Adrenal gland (tissue), 19 donors: ENCODE measurements at regions of chr12 and their contacts with region 1.

Region 1: GRCh38 chr12:50055831-50056638 is 1.4 kb upstream of the ASIC1 start:
- DNase-seq: peak in 3 of 7 donors; percentile 40 to 62 (median 52)
- H3K4me3 ChIP-seq: no peak overlapping the region
- H3K27ac ChIP-seq: no peak overlapping the region
- H3K4me1 ChIP-seq: peaks cover 11 to 14% of the 10 kb centered on the region in 2 donors
- H3K27me3 ChIP-seq: peaks cover 6% of the 10 kb centered on the region
- CTCF ChIP-seq: peak; percentile 69 to 92 (median 86)
- POLR2A ChIP-seq: no peak

Region 2: GRCh38 chr12:49866859-49867579 is 189.0 kb before region 1 on chr12:
- intact Hi-C with region 1: loop called (anchors 5 to 10 kb)
- DNase-seq: peak; percentile 58 to 93 (median 76)
- H3K4me3 ChIP-seq: no peak overlapping the region
- H3K27ac ChIP-seq: peak overlapping the region in 2 of 5 donors; percentile 8 to 36
- H3K4me1 ChIP-seq: peaks cover 0 to 21% of the 10 kb centered on the region in 2 donors
- H3K27me3 ChIP-seq: no peaks in the 10 kb centered on the region
- CTCF ChIP-seq: peak; percentile 89 to 98 (median 96)
- POLR2A ChIP-seq: no peak

Region 3: GRCh38 chr12:49967042-49967776 is 88.8 kb before region 1 on chr12:
- intact Hi-C with region 1: loop called (anchors 5 kb)
- DNase-seq: peak; percentile 88 to 96 (median 92)
- H3K4me3 ChIP-seq: peak overlapping the region in 2 of 4 donors; percentile 0 to 5
- H3K27ac ChIP-seq: no peak overlapping the region
- H3K4me1 ChIP-seq: peaks cover 5 to 9% of the 10 kb centered on the region in 2 donors
- H3K27me3 ChIP-seq: peaks cover 3% of the 10 kb centered on the region
- CTCF ChIP-seq: peak; percentile 63 to 96 (median 89)
- POLR2A ChIP-seq: no peak

Region 4: GRCh38 chr12:49974231-49974675 is 81.8 kb before region 1 on chr12:
- intact Hi-C with region 1: loop called (anchors 5 kb)
- DNase-seq: peak; percentile 68 to 90 (median 75)
- H3K4me3 ChIP-seq: no peak overlapping the region
- H3K27ac ChIP-seq: no peak overlapping the region
- H3K4me1 ChIP-seq: no peaks in the 10 kb centered on the region
- H3K27me3 ChIP-seq: peaks cover 3% of the 10 kb centered on the region
- CTCF ChIP-seq: peak; percentile 42 to 73 (median 64)
- POLR2A ChIP-seq: no peak